ENCODE measurements at regions of chr12 and their contacts with region 1.

Region 1: GRCh38 chr12:84964048-84964447 is 51.4 kb upstream of the SLC6A15 start:
- DNase-seq: no peak
- ATAC-seq: no peak
- H3K4me3 ChIP-seq: no peak overlapping the region
- H3K27ac ChIP-seq: no peak overlapping the region
- H3K4me1 ChIP-seq: no peaks in the 10 kb centered on the region
- H3K27me3 ChIP-seq: peaks cover 3% of the 10 kb centered on the region; the same call in 1 of the 2 replicates
- CTCF ChIP-seq: no peak
- POLR2A ChIP-seq: no peak
- RAD21 ChIP-seq: no peak

Region 2: GRCh38 chr12:84793558-84794296 is 170.3 kb before region 1 on chr12:
- CTCF ChIA-PET with region 1: no interaction called
- POLR2A ChIA-PET with region 1: no interaction called
- dilution Hi-C with region 1: no loop called
- in situ Hi-C with region 1: no loop called
- intact Hi-C with region 1: no loop called
- DNase-seq: peak; percentile 23
- ATAC-seq: no peak
- H3K4me3 ChIP-seq: no peak overlapping the region
- H3K27ac ChIP-seq: no peak overlapping the region
- H3K4me1 ChIP-seq: no peaks in the 10 kb centered on the region
- H3K27me3 ChIP-seq: no peaks in the 10 kb centered on the region
- CTCF ChIP-seq: no peak
- POLR2A ChIP-seq: no peak
- RAD21 ChIP-seq: no peak

Region 3: DNA sequence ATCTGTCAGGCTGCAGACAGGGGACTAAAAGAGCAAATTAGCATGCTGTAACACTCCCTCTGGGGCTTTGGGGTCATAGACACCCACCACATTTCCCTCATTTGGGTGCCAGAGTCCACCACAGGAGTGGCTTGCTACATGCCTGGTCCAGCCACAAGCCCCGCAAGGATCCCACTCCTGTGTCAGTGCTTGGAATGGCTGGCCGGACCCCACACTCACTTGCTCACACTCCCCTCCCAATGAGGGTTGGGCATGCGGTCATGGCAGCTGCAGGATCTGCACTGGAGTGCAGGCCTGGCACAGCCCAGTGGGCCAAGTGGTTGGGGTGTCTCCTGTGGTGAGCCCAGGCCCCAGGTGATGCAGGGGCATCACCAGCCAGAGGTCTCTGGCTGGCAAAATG is 12.1 kb after region 1 on chr12:
- CTCF ChIA-PET with region 1: no interaction called
- POLR2A ChIA-PET with region 1: interaction called, 17 read pairs
- dilution Hi-C with region 1: no loop called
- in situ Hi-C with region 1: no loop called
- intact Hi-C with region 1: no loop called
- DNase-seq: no peak
- ATAC-seq: no peak
- H3K4me3 ChIP-seq: no peak overlapping the region
- H3K27ac ChIP-seq: no peak overlapping the region
- H3K4me1 ChIP-seq: no peaks in the 10 kb centered on the region
- H3K27me3 ChIP-seq: no peaks in the 10 kb centered on the region
- CTCF ChIP-seq: no peak
- POLR2A ChIP-seq: no peak
- RAD21 ChIP-seq: no peak

Region 4: DNA sequence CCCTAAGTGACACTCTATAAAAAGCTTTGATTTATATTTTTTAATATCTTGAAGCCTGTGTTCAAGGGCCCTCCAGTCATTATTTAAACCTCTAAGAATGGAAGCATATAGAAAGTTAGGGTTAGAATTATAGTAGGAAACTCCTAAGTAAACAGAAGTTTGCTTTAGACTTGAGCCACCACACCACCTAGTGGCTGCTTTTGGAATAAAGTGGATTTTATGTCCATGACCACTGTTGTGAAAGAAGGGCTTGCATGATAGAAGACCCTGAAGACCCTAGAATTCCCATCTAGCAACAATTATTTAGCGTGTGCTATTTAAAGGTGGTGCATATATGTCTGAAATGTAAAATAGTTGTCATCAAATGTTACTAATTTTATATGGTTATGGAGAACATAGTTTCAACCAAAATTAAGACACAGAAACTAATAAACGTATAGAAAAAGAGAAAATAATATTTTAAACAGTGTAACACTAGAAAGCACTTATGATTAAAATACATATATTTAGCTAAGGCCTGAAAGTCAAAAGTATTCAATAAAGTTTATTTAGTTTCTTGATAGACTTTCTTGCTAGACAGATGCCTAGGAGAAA is 93.4 kb after region 1 on chr12:
- CTCF ChIA-PET with region 1: no interaction called
- POLR2A ChIA-PET with region 1: no interaction called
- dilution Hi-C with region 1: no loop called
- in situ Hi-C with region 1: no loop called
- intact Hi-C with region 1: no loop called
- DNase-seq: peak; percentile 41
- ATAC-seq: peak; percentile 56; the same call in 1 of the 2 replicates
- H3K4me3 ChIP-seq: no peak overlapping the region
- H3K27ac ChIP-seq: no peak overlapping the region
- H3K4me1 ChIP-seq: no peaks in the 10 kb centered on the region
- H3K27me3 ChIP-seq: no peaks in the 10 kb centered on the region
- CTCF ChIP-seq: peak; percentile 67
- POLR2A ChIP-seq: no peak
- RAD21 ChIP-seq: peak; percentile 45